ENCODE measurements at regions of chr2 and their contacts with region 1.

Region 1: GRCh38 chr2:207166039-207166348 is 246 bp upstream of the KLF7 start:
- DNase-seq: peak; percentile 88 to 97 (median 95)
- ATAC-seq: peak; percentile 90
- H3K4me3 ChIP-seq: peak overlapping the region; percentile 72 to 90
- H3K4me3 Mint-ChIP-seq: peak overlapping the region; percentile 96
- H3K27ac ChIP-seq: peak overlapping the region; percentile 93 to 98
- H3K27ac Mint-ChIP-seq: peak overlapping the region; percentile 97
- H3K4me1 ChIP-seq: peaks cover 15% of the 10 kb centered on the region
- H3K4me1 Mint-ChIP-seq: peaks cover 46% of the 10 kb centered on the region
- H3K27me3 ChIP-seq: peaks cover 0 to 4% of the 10 kb centered on the region in 2 experiments
- H3K27me3 Mint-ChIP-seq: no peaks in the 10 kb centered on the region
- CTCF ChIP-seq: no peak

Region 2: DNA sequence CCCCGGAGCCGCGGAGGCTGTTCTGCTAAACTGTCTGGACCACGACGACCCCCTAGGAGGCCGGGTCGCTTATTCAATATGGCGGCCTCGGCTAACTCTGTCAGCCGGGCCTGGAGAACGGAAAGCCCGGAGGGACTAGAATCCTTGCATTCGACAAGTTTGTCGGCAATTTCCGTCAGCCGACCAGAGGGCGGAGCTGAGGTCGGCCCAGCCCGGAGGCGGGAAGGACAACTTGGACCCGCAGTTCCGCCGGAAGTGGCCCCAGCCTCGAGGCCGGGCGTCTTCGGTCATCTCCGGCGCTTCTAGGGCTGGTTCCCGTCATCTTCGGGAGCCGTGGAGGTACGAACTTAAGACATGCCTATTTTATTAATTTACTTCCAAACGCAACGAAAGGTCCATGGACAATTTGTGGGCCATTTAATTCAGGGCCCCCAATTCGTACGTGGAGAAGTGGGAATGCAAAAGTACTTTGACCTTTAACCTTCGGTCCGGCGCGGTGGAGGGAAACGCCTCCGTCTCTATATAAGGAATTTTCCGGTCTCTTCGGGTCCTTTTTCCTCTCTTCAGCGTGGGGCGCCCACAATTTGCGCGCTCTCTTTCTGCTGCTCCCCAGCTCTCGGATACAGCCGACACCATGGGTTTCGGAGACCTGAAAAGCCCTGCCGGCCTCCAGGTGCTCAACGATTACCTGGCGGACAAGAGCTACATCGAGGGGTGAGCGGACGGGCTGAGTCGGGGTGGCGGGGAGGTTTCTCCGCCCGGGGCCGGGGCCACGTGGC is 1006.5 kb before region 1 on chr2 and contains the starts of genes EEF1B2 and NDUFS1:
- CTCF ChIA-PET with region 1: no interaction called
- POLR2A ChIA-PET with region 1: no interaction called
- intact Hi-C with region 1: loop called (anchors 5 to 10 kb)
- DNase-seq: peak; percentile 95 to 99 (median 96)
- ATAC-seq: peak; percentile 85
- H3K4me3 ChIP-seq: peak within 1 kb of the TSS; percentile 73 to 93
- H3K4me3 Mint-ChIP-seq: peak within 1 kb of the TSS; percentile 99
- H3K27ac ChIP-seq: peak within 1 kb of the TSS; percentile 81 to 91
- H3K27ac Mint-ChIP-seq: peak within 1 kb of the TSS; percentile 100
- H3K4me1 ChIP-seq: peaks cover 30% of the 10 kb centered on the region
- H3K4me1 Mint-ChIP-seq: peaks cover 59% of the 10 kb centered on the region
- H3K27me3 ChIP-seq: no peaks in the 10 kb centered on the region
- H3K27me3 Mint-ChIP-seq: no peaks in the 10 kb centered on the region
- CTCF ChIP-seq: no peak
- total RNA-seq, gene EEF1B2: 1,147 to 1,208 TPM
- total RNA-seq, gene NDUFS1: 23.7 to 28.7 TPM

Region 3: GRCh38 chr2:207086136-207086535 is 79.9 kb before region 1 on chr2:
- CTCF ChIA-PET with region 1: no interaction called
- POLR2A ChIA-PET with region 1: interaction called, 3 read pairs
- intact Hi-C with region 1: loop called in 1 of 2 experiments (anchors 5 kb)
- DNase-seq: no peak
- ATAC-seq: no peak
- H3K4me3 ChIP-seq: no peak overlapping the region
- H3K4me3 Mint-ChIP-seq: no peak overlapping the region
- H3K27ac ChIP-seq: no peak overlapping the region
- H3K27ac Mint-ChIP-seq: no peak overlapping the region
- H3K4me1 ChIP-seq: peaks cover 27% of the 10 kb centered on the region
- H3K4me1 Mint-ChIP-seq: peaks cover 29% of the 10 kb centered on the region
- H3K27me3 ChIP-seq: no peaks in the 10 kb centered on the region
- H3K27me3 Mint-ChIP-seq: no peaks in the 10 kb centered on the region
- CTCF ChIP-seq: no peak

Region 4: GRCh38 chr2:207133820-207134519 is 32.0 kb before region 1 on chr2:
- CTCF ChIA-PET with region 1: no interaction called
- POLR2A ChIA-PET with region 1: interaction called, 15 read pairs
- intact Hi-C with region 1: loop called in 1 of 2 experiments (anchors 1 kb)
- DNase-seq: no peak
- ATAC-seq: no peak
- H3K4me3 ChIP-seq: no peak overlapping the region
- H3K4me3 Mint-ChIP-seq: no peak overlapping the region
- H3K27ac ChIP-seq: no peak overlapping the region
- H3K27ac Mint-ChIP-seq: peak overlapping the region; percentile 15
- H3K4me1 ChIP-seq: peaks cover 41% of the 10 kb centered on the region
- H3K4me1 Mint-ChIP-seq: peaks cover 69% of the 10 kb centered on the region
- H3K27me3 ChIP-seq: no peaks in the 10 kb centered on the region
- H3K27me3 Mint-ChIP-seq: no peaks in the 10 kb centered on the region
- CTCF ChIP-seq: no peak

Region 5: DNA sequence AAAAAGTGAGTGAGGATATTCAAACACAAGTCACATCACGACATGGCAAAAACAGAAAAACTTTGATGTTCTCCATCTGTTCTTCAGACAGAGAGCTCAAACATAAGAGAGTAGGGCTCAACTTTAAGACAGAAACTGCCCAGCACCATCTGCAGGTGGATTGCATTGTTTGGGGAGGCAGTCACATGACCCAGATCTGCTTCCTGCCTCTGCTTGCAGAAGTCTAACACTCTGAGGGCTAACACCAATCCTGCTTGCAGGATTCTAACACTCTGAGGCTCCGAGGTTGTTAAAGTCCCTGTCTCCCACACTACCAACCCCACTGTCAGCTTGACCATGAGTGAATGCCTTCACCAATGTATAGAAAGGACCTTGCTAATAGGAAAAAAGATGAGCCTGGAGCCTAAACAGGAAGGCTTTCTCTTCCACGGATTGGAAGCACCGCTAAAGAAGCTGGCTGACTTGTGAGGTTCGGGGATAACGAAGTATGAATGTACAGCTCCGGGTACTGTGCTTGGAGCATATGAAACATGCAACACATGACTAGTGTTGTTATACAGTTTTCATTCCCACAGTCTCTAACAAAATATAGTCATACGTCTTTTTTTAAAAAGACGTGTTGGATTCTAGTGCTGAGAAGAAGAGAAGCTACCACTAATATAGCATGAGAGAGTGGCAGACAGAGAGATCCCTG is 187.1 kb after region 1 on chr2:
- CTCF ChIA-PET with region 1: interaction called, 3 read pairs
- POLR2A ChIA-PET with region 1: no interaction called
- intact Hi-C with region 1: loop called in 1 of 2 experiments (anchors 5 kb)
- DNase-seq: peak in 5 of 9 experiments; percentile 2 to 51 (median 22)
- ATAC-seq: peak; percentile 34
- H3K4me3 ChIP-seq: no peak overlapping the region
- H3K4me3 Mint-ChIP-seq: no peak overlapping the region
- H3K27ac ChIP-seq: no peak overlapping the region
- H3K27ac Mint-ChIP-seq: no peak overlapping the region
- H3K4me1 ChIP-seq: peaks cover 7% of the 10 kb centered on the region
- H3K4me1 Mint-ChIP-seq: peaks cover 8% of the 10 kb centered on the region
- H3K27me3 ChIP-seq: no peaks in the 10 kb centered on the region
- H3K27me3 Mint-ChIP-seq: no peaks in the 10 kb centered on the region
- CTCF ChIP-seq: no peak